ENCODE measurements at regions of chr7 and their contacts with region 1.

Region 1: DNA sequence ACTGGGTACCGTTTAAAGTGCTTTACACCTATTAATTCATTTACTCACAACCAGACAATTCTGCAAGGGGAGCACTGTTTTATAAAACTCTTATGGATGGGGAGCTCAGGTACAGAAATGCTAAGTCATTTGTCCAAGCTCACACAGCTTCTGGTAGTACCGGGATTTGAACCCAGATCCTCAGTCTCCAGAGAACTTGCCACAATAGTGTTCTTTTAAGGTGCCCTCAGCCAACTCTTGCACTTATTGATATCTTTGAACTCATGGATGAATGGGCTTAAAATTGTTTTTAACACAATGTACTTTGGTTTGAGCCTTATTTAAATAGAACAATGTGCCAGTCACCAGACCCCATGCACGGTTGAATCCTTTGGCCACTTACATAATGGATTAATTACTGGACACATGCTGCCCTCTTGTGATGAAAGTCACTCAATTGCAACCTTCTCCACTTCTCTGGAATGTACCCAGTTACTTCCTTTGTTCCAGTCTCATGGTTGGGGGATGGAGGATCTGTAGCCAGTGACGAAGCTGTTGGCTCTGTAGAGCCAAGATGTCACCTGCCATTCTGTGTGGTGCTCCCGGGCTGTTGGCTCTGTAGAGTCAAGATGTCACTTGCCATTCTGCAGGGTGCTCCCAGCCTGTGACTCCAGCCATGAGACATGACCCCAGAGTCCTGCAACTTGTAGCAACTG is 65.6 kb downstream of the NOD1 start:
- DNase-seq: peak; percentile 52
- ATAC-seq: peak; percentile 94
- H3K4me3 ChIP-seq: no peak overlapping the region
- H3K27ac ChIP-seq: no peak overlapping the region
- H3K4me1 ChIP-seq: no peaks in the 10 kb centered on the region
- H3K27me3 ChIP-seq: no peaks in the 10 kb centered on the region
- CTCF ChIP-seq: peak; percentile 58

Region 2: GRCh38 chr7:30164567-30164966 is 248.4 kb before region 1 on chr7:
- CTCF ChIA-PET with region 1: no interaction called
- POLR2A ChIA-PET with region 1: no interaction called
- in situ Hi-C with region 1: no loop called
- intact Hi-C with region 1: loop called (anchors 5 kb)
- DNase-seq: peak; percentile 30
- ATAC-seq: peak; percentile 77
- H3K4me3 ChIP-seq: no peak overlapping the region
- H3K27ac ChIP-seq: no peak overlapping the region
- H3K4me1 ChIP-seq: peaks cover 6% of the 10 kb centered on the region
- H3K27me3 ChIP-seq: peaks cover 5% of the 10 kb centered on the region; the same call in 1 of the 2 replicates
- CTCF ChIP-seq: peak; percentile 85

Region 3: DNA sequence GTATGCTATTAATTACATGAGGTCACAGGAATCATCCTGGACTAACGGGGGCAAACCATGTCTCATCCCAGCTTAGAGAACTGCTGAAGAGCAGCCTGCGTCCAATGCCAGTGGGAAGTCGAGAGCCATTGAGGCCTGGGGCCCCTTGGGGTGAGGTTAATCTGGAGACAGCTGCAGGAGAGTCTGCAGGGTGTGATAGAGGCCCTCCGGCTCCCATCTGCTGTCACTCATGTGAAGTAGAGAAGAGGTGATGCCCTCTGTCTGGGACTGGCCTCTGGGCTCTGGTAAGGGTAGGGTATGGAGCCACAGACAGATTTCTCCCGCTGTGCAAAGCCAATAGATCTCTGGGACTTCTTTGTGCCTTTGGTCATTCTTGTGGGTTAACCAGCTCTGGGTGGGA is 234.6 kb after region 1 on chr7:
- CTCF ChIA-PET with region 1: no interaction called
- POLR2A ChIA-PET with region 1: no interaction called
- in situ Hi-C with region 1: no loop called
- intact Hi-C with region 1: no loop called
- DNase-seq: no peak
- ATAC-seq: peak; percentile 47
- H3K4me3 ChIP-seq: no peak overlapping the region
- H3K27ac ChIP-seq: no peak overlapping the region
- H3K4me1 ChIP-seq: no peaks in the 10 kb centered on the region
- H3K27me3 ChIP-seq: no peaks in the 10 kb centered on the region
- CTCF ChIP-seq: no peak